CD8-positive, alpha-beta T cell (primary cell): ENCODE measurements at regions of chr11 and their contacts with region 1.

Region 1: GRCh38 chr11:118359295-118359958 is at the start of gene UBE4A:
- DNase-seq: peak; percentile 93 to 100 (median 99)
- ATAC-seq: peak; percentile 80
- H3K4me3 ChIP-seq: peak within 1 kb of the TSS; percentile 66 to 89
- H3K4me3 Mint-ChIP-seq: peak within 1 kb of the TSS; percentile 93
- H3K27ac ChIP-seq: peak within 1 kb of the TSS; percentile 89 to 93
- H3K27ac Mint-ChIP-seq: peak within 1 kb of the TSS; percentile 98
- H3K4me1 ChIP-seq: peaks cover 38% of the 10 kb centered on the region
- H3K4me1 Mint-ChIP-seq: peaks cover 52% of the 10 kb centered on the region
- H3K27me3 ChIP-seq: no peaks in the 10 kb centered on the region
- H3K27me3 Mint-ChIP-seq: no peaks in the 10 kb centered on the region
- CTCF ChIP-seq: no peak
- total RNA-seq, gene UBE4A: 53.7 to 57.5 TPM

Region 2: GRCh38 chr11:118343981-118344515 is 15.4 kb before region 1 on chr11 and contains the start of gene CD3G:
- CTCF ChIA-PET with region 1: interaction called, 34 read pairs
- POLR2A ChIA-PET with region 1: interaction called, 8 read pairs
- intact Hi-C with region 1: loop called (anchors 1 to 2 kb)
- DNase-seq: peak; percentile 50 to 87 (median 79)
- ATAC-seq: peak; percentile 68
- H3K4me3 ChIP-seq: peak within 1 kb of the TSS; percentile 87 to 92
- H3K4me3 Mint-ChIP-seq: peak within 1 kb of the TSS; percentile 93
- H3K27ac ChIP-seq: peak within 1 kb of the TSS; percentile 72 to 94
- H3K27ac Mint-ChIP-seq: peak within 1 kb of the TSS; percentile 99
- H3K4me1 ChIP-seq: peaks cover 40% of the 10 kb centered on the region
- H3K4me1 Mint-ChIP-seq: peaks cover 80% of the 10 kb centered on the region
- H3K27me3 ChIP-seq: no peaks in the 10 kb centered on the region
- H3K27me3 Mint-ChIP-seq: no peaks in the 10 kb centered on the region
- CTCF ChIP-seq: no peak
- total RNA-seq, gene CD3G: 88.8 to 98.6 TPM